GM12878 (cell line): ENCODE measurements at regions of chr5 and their contacts with region 1.

Region 1: DNA sequence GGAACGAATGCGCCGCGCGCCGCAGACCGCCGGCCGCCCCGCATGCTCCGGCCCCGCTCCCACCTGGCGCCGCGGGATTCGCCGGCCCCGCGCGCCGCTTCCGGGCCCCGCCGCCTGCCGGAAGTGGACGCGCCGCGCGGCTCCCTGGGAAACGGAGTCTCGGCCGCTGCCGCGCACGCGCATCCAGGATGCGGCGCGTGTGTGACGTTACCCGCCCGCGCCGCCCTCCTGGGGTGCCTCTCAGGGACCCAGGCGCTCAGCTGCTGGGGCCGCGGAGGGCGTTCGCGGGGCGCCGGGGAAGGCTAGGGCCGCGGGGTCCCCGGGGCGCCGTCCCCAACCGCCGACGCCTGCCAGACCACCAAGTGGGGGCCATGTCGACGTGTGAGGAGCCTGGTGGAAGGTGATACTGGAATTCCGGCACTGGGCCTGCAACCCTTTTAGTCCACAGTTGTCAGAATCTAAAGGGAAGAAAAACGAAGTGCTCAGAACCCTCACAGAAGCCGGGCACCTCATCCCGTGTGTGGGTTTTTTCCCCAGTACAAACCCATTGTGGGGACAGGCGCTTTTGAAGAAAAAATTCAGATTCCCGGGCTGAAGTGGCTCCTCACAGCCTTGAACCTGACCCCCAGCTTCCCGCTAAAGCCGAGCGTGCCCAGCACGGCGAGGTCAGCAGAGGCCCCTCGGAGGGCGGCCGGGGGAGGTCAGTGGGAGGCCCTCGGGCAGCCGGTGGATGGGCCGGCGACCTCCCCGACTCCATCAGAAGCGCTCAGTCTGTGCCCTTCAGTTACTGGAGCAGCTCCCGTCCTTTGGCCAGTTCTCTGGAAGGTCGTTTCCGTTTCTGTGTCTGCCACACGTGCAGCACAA is at the start of gene CLPTM1L:
- DNase-seq: peak; percentile 50
- ATAC-seq: peak; percentile 79
- H3K4me3 ChIP-seq: peak within 1 kb of the TSS; percentile 98
- H3K27ac ChIP-seq: peak within 1 kb of the TSS; percentile 68
- H3K4me1 ChIP-seq: peaks cover 28% of the 10 kb centered on the region
- H3K27me3 ChIP-seq: no peaks in the 10 kb centered on the region
- CTCF ChIP-seq: no peak
- EP300 ChIP-seq: no peak
- POLR2A ChIP-seq: peak; percentile 87
- RAD21 ChIP-seq: no peak
- polyA plus RNA-seq, gene CLPTM1L: 2.9 to 22.8 TPM

Region 2: GRCh38 chr5:1167728-1168709 is 177.2 kb before region 1 on chr5:
- CTCF ChIA-PET with region 1: interaction called, 3 read pairs
- POLR2A ChIA-PET with region 1: no interaction called
- RAD21 ChIA-PET with region 1: no interaction called
- SMC1A ChIA-PET with region 1: interaction called, 3 read pairs
- in situ Hi-C with region 1: no loop called
- intact Hi-C with region 1: loop called (anchors 5 kb)
- DNase-seq: no peak
- ATAC-seq: peak; percentile 93
- H3K4me3 ChIP-seq: no peak overlapping the region
- H3K27ac ChIP-seq: no peak overlapping the region
- H3K4me1 ChIP-seq: peaks cover 3% of the 10 kb centered on the region
- H3K27me3 ChIP-seq: no peaks in the 10 kb centered on the region; a peak in 1 of 4 replicates
- CTCF ChIP-seq: peak; percentile 71 to 89 (median 81)
- EP300 ChIP-seq: no peak
- POLR2A ChIP-seq: no peak
- RAD21 ChIP-seq: peak; percentile 82